ENCODE measurements at regions of chr1 and their contacts with region 1.

Region 1: DNA sequence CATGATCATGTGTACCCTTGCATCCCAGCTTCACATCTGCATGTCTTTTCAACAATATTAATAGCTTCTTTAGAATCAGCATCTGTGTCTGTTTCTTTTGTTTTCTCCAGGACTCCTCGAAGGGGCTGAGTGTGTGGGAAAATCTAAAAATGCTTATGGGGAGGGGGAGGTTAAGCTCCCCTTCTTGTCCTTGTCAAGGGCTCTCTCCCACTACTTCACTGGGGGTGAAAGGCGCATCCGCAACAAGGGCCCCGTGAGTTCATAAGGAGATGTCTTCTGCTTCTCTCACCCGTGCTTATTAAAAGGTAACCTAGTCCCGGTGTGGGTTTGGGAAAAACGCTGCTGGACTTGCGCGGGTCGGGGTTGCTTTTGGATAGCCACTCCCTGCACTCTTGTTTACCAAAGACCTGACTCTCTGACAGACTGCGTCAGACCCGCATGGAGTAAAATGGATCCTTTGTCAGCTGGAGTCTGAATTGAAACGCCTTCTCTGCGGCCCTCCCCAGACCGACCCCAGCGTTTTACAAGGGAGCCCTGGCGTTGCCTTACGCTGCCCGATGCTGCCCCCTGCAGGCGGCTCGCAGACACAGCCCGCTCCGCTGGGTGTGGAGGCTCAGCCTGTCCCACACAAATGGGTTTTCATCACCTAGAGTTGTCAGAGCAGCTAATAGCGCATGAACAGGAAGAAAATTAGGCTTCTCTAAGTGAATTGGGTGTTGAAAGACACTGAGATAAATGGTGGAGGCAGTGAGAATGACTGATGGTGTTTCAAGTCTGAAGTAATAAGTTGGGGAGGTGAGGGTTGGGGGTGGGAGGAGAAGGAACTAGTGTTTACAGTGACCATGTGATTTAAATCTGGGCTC is 53.8 kb downstream of the IER5 start:
- DNase-seq: peak; percentile 97
- H3K4me3 Mint-ChIP-seq: peak overlapping the region; percentile 70
- H3K27ac Mint-ChIP-seq: peak overlapping the region; percentile 90
- H3K4me1 Mint-ChIP-seq: peaks cover 63% of the 10 kb centered on the region
- H3K27me3 Mint-ChIP-seq: peaks cover 16% of the 10 kb centered on the region

Region 2: DNA sequence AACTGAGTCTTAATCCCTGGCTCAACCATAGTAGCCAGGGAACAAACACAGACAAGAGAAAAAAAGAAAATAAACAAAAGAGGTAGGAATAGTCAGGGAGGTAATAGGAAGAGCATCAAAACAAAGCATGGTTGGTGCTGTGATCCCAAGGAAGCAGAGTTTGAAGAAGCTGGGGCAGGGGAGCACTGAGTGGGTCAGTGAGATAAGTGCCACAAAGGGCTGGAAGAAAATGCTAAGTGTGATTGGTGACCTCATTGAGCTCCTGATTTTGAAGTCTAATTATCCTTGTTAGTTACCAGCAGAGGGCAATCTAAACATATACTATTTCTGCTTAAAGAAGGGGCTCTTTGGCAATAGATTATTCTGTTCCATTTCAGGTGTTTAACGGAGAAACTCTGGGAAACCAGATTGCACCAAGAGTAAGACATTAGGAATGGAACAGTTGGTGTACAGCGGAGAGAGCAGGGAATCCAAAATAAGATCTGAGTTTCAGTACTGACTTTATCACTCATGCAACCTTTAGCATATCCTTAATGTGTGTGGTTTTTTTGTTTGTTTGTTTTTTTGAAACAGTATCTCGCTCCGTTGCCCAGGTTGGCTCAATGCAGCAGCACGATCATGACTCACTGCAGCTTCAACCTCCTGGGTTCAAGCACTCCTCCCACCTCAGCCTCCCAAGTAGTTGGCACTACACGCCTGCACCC is 260.4 kb before region 1 on chr1:
- intact Hi-C with region 1: loop called (anchors 1 kb)
- DNase-seq: no peak
- H3K4me3 Mint-ChIP-seq: no peak overlapping the region
- H3K27ac Mint-ChIP-seq: no peak overlapping the region
- H3K4me1 Mint-ChIP-seq: peaks cover 3% of the 10 kb centered on the region
- H3K27me3 Mint-ChIP-seq: no peaks in the 10 kb centered on the region

Region 3: DNA sequence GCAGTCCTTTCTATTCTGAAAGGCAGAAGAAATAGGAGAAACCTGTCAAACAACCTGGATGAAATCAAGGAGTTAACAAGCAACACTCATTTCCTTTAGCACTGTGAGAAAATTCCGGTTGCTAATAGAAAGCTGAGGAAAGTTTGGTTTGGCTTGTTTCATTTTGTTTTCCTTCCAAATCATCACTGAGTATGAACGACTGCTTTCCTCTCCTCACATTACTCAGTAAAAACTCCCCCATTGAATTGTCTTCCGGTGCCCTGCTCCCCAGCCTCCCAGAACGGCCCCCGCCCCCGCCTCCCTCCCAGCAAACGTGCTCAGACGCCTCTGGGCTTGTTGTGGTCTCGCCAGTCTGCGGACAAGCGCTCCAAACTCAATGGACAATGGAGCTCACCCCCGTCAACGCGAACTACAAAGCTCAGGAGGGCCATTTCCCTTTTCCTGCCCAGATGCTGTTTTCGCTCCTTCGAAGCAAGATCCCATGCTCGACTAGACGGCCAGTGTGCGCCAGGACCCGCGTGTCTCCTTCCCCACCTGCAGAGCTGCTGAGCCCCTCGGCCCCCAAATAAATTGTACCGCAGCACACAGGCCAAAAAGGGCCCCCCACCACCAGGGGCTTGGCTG is 120.4 kb before region 1 on chr1:
- intact Hi-C with region 1: loop called (anchors 1 kb)
- DNase-seq: peak; percentile 84
- H3K4me3 Mint-ChIP-seq: peak overlapping the region; percentile 96
- H3K27ac Mint-ChIP-seq: peak overlapping the region; percentile 96
- H3K4me1 Mint-ChIP-seq: peaks cover 38% of the 10 kb centered on the region
- H3K27me3 Mint-ChIP-seq: peaks cover 21% of the 10 kb centered on the region

Region 4: GRCh38 chr1:181099152-181100014 is 42.9 kb before region 1 on chr1:
- intact Hi-C with region 1: loop called (anchors 1 kb)
- DNase-seq: peak; percentile 83
- H3K4me3 Mint-ChIP-seq: peak overlapping the region; percentile 79
- H3K27ac Mint-ChIP-seq: peak overlapping the region; percentile 96
- H3K4me1 Mint-ChIP-seq: peaks cover 83% of the 10 kb centered on the region
- H3K27me3 Mint-ChIP-seq: no peaks in the 10 kb centered on the region

Region 5: GRCh38 chr1:181112071-181112929 is 30.0 kb before region 1 on chr1:
- intact Hi-C with region 1: no loop called
- DNase-seq: no peak
- H3K4me3 Mint-ChIP-seq: no peak overlapping the region
- H3K27ac Mint-ChIP-seq: peak overlapping the region; percentile 14
- H3K4me1 Mint-ChIP-seq: peaks cover 24% of the 10 kb centered on the region
- H3K27me3 Mint-ChIP-seq: peaks cover 36% of the 10 kb centered on the region

Region 6: DNA sequence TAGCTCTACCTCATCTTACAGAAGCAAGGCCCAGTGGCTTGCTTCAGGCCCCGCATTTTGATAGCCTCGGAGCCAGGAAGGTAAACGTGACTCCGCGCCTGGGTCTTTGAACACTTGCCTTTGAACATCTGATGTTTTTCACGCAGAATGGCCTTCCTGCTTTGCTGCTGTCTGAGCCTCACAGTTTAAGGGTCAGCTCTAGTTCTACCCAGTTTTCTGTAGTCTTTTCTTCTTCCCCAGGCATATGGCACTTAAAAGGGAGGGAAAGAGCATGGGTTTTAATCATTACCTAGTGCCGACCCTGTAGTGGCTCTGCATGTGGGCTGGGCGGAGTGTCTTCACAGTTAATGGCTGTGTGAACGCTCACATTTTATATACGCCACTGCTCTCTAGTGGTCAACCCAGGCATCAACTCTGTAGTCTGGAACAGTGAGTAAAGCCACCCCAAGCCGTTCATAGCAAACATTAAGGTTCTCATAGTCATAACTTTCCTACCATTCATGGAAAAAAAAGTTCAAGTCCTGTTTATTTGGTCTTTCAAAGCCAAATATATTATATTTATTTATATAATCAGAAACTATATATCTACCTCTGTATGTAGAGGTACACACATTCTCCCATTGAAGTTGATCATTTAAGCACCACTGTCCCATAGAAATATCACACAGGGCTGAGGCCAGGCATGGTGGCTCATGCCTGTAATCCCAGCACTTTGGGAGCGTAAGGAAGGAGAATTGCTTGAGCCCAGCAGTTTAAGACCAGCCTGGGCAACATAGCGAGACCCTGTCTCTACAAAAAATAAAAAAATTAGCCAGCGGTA is 24.3 kb after region 1 on chr1:
- intact Hi-C with region 1: loop called (anchors 1 kb)
- DNase-seq: peak; percentile 93
- H3K4me3 Mint-ChIP-seq: peak overlapping the region; percentile 8
- H3K27ac Mint-ChIP-seq: no peak overlapping the region
- H3K4me1 Mint-ChIP-seq: peaks cover 3% of the 10 kb centered on the region
- H3K27me3 Mint-ChIP-seq: peaks cover 11% of the 10 kb centered on the region

Measured in activated CD4-positive, alpha-beta T cell treated with anti-CD3 and anti-CD28 coated beads, Interleukin-2, amount 10 ng/mL, durations not matched to agents 24 days and 14 days (primary cell).